ENCODE measurements at regions of chr11 and their contacts with region 1.

Region 1: DNA sequence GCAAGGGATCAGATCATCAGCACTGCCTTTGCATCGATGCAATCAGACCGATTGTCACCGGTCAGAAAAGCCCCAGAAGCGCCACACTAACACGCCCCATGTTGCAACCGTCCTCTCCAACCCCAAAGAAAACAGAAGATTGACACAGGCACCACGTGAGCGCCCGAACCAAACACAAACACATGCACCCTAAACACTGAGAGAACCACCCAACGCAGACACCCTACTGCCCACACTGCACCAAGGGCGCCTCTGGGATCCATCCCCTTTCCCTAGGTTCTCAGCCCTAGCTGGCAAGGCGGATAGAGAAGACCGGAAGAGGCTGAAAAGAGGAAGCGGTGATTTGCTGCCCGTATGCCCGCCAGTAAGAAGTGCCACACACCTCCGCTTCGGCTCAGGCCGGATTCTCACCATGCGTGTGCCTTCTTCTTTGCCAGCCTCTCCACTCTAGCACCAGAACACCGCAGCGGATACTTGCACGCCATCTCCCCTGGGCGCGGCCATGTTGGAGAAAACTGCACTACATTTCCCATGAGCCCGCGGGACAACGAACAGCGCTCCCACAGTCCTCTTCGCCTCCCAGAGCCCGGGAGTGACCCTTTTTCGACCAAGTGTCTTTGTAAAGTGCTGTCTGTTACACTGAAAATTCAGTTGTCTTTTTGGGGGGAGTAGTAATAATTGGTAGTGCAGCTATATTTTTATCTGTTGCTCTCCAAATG is at the start of gene ALKBH8:
- DNase-seq: peak; percentile 89
- H3K4me3 Mint-ChIP-seq: peak within 1 kb of the TSS; percentile 85
- H3K27ac Mint-ChIP-seq: peak within 1 kb of the TSS; percentile 92
- H3K4me1 Mint-ChIP-seq: peaks cover 48% of the 10 kb centered on the region
- H3K27me3 Mint-ChIP-seq: no peaks in the 10 kb centered on the region
- total RNA-seq, gene ALKBH8: 10.1 to 12.2 TPM

Region 2: GRCh38 chr11:106076919-106077608 is 1488.3 kb before region 1 on chr11 and contains the start of gene KBTBD3:
- CTCF ChIA-PET with region 1: no interaction called
- intact Hi-C with region 1: loop called (anchors 5 kb)
- DNase-seq: peak; percentile 98
- H3K4me3 Mint-ChIP-seq: peak within 1 kb of the TSS; percentile 91
- H3K27ac Mint-ChIP-seq: peak within 1 kb of the TSS; percentile 93
- H3K4me1 Mint-ChIP-seq: peaks cover 47% of the 10 kb centered on the region
- H3K27me3 Mint-ChIP-seq: no peaks in the 10 kb centered on the region
- total RNA-seq, gene KBTBD3: 6.6 to 7.9 TPM

Region 3: DNA sequence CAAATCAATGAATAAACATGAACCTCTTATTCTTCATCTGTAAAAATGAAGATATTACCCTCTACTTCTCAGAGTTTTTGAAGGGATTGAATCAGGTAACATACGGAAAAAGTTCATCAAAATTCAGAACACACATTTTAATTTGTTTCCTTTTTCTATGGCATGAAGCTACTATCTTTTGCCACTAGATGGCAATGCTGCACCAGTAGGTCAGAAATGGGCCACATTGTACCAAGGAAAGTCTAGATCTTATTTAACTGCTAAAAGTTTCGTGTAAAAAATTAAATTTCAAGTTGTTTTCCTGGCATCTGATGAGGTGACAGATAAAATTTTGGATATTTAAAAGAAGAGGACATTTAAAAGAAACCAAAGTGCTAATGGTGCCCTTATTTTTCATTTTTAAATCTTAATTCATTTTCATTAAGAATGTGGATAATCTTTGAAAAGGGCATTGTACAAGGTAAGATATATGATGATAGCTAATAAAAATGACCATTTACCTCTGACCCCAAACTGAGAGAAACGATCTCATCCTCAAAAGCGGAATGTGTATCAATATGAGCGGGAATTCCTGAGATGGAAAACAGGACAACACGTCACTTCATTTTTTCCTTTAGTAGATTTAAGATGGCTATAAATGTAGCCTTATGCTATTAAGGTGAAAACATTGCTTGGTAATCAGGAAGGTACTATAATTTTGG is 16.0 kb before region 1 on chr11:
- CTCF ChIA-PET with region 1: interaction called, 52 read pairs
- intact Hi-C with region 1: loop called (anchors 1 kb)
- DNase-seq: peak; percentile 55
- H3K4me3 Mint-ChIP-seq: no peak overlapping the region
- H3K27ac Mint-ChIP-seq: no peak overlapping the region
- H3K4me1 Mint-ChIP-seq: peaks cover 6% of the 10 kb centered on the region
- H3K27me3 Mint-ChIP-seq: no peaks in the 10 kb centered on the region

Region 4: DNA sequence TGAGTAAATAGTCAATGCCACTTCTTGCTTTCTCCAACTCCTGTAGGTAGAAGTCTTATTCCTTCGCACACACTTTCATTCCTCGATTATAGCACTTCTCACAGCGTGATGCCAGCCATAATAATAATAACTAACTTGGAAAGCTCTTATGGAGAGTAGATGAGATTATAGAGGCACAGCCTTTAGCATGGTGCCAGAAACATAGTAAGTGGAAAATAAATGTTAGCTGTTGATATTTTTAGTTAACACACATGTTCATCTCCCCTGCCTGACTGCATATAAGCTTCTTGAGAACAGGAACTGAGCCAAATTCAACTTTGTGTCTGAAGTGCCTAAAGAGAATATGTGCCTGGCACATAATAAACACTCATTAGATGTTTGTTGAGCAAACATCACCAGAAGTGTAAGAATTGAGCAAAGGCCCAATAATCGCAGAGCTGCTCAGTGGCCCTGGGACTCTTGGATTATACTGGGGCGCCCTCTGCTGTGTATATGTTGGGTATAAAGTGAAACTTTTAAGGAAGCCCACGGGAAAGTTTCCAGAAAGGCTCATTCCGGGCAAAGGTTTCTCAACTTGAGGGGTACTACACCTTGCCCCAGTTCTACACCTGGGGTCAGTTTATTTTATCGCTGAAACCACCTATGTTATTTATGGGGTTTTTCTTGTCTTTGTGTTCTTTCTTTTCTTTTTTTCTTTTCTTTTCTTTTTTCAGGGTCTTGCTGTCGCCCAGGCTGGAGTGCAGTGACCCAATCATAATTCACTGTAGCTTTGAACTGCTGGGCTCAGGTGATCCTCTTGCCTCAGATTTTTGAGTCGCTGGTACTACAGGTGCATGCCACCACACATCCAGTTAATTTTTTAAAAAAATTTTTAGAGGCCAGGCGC is 124.2 kb after region 1 on chr11:
- CTCF ChIA-PET with region 1: interaction called, 45 read pairs
- intact Hi-C with region 1: loop called (anchors 1 kb)
- DNase-seq: peak; percentile 81
- H3K4me3 Mint-ChIP-seq: no peak overlapping the region
- H3K27ac Mint-ChIP-seq: no peak overlapping the region
- H3K4me1 Mint-ChIP-seq: no peaks in the 10 kb centered on the region
- H3K27me3 Mint-ChIP-seq: peaks cover 13% of the 10 kb centered on the region

Region 5: GRCh38 chr11:107858217-107859070 is 293.1 kb after region 1 on chr11 and contains the start of gene SLC35F2:
- CTCF ChIA-PET with region 1: no interaction called
- intact Hi-C with region 1: loop called (anchors 1 kb)
- DNase-seq: peak; percentile 77
- H3K4me3 Mint-ChIP-seq: peak within 1 kb of the TSS; percentile 95
- H3K27ac Mint-ChIP-seq: peak within 1 kb of the TSS; percentile 91
- H3K4me1 Mint-ChIP-seq: peaks cover 21% of the 10 kb centered on the region
- H3K27me3 Mint-ChIP-seq: no peaks in the 10 kb centered on the region
- total RNA-seq, gene SLC35F2: 18.2 to 20.5 TPM

Region 6: GRCh38 chr11:108135845-108136544 is 570.6 kb after region 1 on chr11:
- CTCF ChIA-PET with region 1: no interaction called
- intact Hi-C with region 1: loop called (anchors 10 kb)
- DNase-seq: peak; percentile 68
- H3K4me3 Mint-ChIP-seq: no peak overlapping the region
- H3K27ac Mint-ChIP-seq: peak overlapping the region; percentile 74
- H3K4me1 Mint-ChIP-seq: peaks cover 25% of the 10 kb centered on the region
- H3K27me3 Mint-ChIP-seq: no peaks in the 10 kb centered on the region

Region 7: DNA sequence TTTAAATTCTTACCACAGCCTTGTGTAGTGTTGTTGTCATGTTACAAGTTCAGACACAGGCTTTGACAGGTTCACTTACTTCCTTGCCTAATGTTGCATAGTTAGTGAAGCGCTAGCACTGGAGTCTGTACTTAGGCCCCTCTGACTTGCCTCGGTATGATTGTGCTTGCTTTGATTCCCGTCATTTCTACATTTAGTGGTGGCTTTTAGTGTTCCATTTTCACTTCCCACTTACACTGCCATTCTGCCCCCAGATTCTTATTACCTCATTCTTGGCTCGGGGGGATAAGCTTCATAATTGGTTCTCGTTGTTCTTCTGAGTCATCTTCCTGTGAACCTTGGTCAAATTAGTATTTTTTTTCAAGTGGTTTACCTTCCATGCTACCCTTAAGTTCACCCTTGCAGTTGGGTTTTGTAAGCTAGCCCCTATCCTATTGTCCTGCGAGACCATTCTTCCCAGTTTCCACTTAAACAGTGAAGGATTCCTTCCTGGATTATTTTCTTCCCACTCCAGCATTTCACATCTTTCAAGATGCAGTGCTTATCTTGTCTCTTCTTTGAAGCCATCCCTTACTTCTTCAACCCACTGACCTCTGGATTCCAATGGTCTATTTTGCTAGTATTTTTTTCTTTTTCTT is 1168.2 kb after region 1 on chr11:
- CTCF ChIA-PET with region 1: no interaction called
- intact Hi-C with region 1: loop called (anchors 1 kb)
- DNase-seq: peak; percentile 72
- H3K4me3 Mint-ChIP-seq: no peak overlapping the region
- H3K27ac Mint-ChIP-seq: peak overlapping the region; percentile 82
- H3K4me1 Mint-ChIP-seq: peaks cover 41% of the 10 kb centered on the region
- H3K27me3 Mint-ChIP-seq: no peaks in the 10 kb centered on the region

Measured in activated naive CD4-positive, alpha-beta T cell treated with anti-CD3 and anti-CD28 coated beads for 36 hours (primary cell).